Dendritic cell treated with granulocyte-macrophage colony-stimulating factor and Interleukin-4, amounts not matched to agents 40 ng/mL and 50 ng/mL, for 4 days (primary cell): ENCODE measurements at regions of chr12 and their contacts with region 1.

Region 1: DNA sequence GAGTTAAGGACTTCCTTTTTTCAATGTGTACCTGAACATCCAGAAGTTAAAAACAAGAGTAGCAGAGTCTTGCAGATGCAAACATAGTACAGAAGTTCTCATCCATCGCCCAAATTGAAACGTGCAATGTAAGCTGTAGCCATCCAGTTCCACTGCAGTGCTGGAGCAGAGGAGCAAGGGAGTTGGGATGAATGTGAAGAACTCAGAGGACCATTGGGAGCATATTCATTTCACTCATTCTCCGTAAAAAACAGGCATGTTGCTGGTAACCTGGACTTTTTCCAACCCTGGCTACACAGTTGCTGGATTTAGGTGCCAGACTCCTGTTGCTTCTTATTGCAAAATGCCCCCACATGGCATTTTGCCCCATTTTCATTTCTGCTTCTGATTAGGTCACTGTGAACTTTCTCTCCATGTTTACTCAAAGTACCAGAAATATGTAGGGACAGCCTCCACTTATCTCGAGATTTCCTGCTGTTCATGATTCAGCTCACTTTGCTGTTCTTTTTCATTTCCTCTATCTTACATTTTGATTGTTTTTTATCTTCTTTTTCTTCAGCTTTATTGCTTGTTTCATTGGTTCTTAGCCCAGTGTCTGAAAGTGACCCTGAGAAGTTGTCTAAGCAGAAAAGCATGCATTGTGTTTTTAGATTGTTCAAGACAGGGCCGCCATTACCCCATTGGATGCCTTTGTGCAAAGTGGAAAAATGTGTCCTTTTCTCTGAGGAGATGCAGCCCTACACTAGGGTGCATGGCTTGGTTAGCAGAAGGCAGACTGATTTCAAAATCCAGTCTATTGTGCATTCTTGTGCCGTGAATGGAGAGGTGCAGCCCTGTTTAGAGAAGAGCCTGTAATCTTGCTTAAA is 109.0 kb upstream of the AMIGO2 start:
- H3K4me3 Mint-ChIP-seq: no peak overlapping the region
- H3K27ac Mint-ChIP-seq: peak overlapping the region; percentile 45
- H3K4me1 Mint-ChIP-seq: peaks cover 57% of the 10 kb centered on the region
- H3K27me3 Mint-ChIP-seq: no peaks in the 10 kb centered on the region

Region 2: GRCh38 chr12:47139000-47139681 is 49.7 kb before region 1 on chr12:
- intact Hi-C with region 1: no loop called
- H3K4me3 Mint-ChIP-seq: no peak overlapping the region
- H3K27ac Mint-ChIP-seq: peak overlapping the region; percentile 58
- H3K4me1 Mint-ChIP-seq: peaks cover 18% of the 10 kb centered on the region
- H3K27me3 Mint-ChIP-seq: no peaks in the 10 kb centered on the region

Region 3: DNA sequence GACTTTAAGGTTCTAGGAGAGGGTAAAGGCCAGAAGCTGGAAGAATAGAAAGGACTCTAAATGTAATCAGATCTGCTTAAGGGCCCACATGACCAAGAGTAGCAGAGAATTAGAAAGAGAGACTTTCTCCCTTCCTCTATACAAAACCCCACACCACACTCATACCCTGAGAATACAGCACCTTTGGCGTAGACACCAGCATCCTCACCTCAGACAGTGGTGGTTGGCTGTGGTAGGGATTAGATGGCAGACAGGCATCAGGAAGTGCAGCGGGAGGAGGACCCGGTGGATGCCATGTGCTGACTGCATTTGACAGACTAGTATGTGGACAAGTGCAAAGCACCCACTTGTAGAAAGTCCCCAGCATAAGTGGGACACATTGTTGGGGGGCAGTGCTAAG is 10.8 kb before region 1 on chr12:
- intact Hi-C with region 1: loop called (anchors 2 kb)
- H3K4me3 Mint-ChIP-seq: no peak overlapping the region
- H3K27ac Mint-ChIP-seq: no peak overlapping the region
- H3K4me1 Mint-ChIP-seq: no peaks in the 10 kb centered on the region
- H3K27me3 Mint-ChIP-seq: no peaks in the 10 kb centered on the region